ENCODE measurements at regions of chr20 and their contacts with region 1.

Region 1: DNA sequence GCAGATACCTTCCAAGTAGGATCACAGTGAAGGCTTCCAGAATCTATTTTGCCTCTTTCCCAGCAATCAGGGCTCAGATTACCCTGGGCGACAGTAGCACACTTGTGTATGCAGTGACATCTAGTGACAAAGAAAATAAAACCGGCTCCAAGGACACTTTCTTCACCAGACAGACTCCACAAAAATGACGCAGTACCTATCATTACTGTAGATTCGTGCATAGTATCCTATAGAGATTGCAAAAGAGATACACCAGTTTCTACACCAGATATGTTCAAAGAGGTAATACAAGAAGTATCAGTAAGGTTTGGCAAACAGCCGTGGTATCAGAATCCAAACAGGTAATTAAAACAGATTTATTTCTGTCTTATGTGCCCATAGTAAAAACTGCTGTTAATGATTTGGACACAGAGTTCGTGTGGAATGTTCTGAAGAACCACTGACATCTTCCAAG is 600.4 kb upstream of the JAG1 start:
- DNase-seq: peak; percentile 76
- ATAC-seq: peak; percentile 96
- H3K4me3 ChIP-seq: no peak overlapping the region
- H3K27ac ChIP-seq: peak overlapping the region; percentile 68; the same call in 1 of the 2 replicates
- H3K4me1 ChIP-seq: peaks cover 10% of the 10 kb centered on the region; the same call in 1 of the 2 replicates
- H3K27me3 ChIP-seq: no peaks in the 10 kb centered on the region
- CTCF ChIP-seq: peak; percentile 77

Region 2: DNA sequence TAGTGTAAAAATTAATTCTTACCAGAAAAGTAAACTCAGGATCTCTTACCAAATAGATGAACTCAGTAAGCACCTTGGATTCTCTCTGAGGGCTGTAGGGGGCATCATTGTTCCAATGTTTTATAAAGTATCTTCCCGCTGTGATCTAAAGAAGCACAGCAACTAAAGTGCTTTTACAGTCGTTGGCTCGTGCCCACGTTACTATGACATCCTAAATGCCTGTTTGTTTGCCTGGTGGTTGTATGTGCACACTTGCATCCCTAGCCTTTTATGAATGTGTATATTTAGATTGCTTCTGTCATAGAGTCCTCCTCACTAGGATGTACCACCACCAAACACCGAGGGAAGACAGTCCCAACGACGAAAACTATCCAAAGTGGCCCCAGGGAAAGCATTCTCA is 804.6 kb before region 1 on chr20:
- CTCF ChIA-PET with region 1: no interaction called
- POLR2A ChIA-PET with region 1: no interaction called
- in situ Hi-C with region 1: no loop called
- intact Hi-C with region 1: loop called (anchors 10 kb)
- DNase-seq: peak; percentile 60
- ATAC-seq: peak; percentile 65; the same call in 1 of the 2 replicates
- H3K4me3 ChIP-seq: no peak overlapping the region
- H3K27ac ChIP-seq: no peak overlapping the region
- H3K4me1 ChIP-seq: no peaks in the 10 kb centered on the region
- H3K27me3 ChIP-seq: no peaks in the 10 kb centered on the region
- CTCF ChIP-seq: peak; percentile 67

Region 3: DNA sequence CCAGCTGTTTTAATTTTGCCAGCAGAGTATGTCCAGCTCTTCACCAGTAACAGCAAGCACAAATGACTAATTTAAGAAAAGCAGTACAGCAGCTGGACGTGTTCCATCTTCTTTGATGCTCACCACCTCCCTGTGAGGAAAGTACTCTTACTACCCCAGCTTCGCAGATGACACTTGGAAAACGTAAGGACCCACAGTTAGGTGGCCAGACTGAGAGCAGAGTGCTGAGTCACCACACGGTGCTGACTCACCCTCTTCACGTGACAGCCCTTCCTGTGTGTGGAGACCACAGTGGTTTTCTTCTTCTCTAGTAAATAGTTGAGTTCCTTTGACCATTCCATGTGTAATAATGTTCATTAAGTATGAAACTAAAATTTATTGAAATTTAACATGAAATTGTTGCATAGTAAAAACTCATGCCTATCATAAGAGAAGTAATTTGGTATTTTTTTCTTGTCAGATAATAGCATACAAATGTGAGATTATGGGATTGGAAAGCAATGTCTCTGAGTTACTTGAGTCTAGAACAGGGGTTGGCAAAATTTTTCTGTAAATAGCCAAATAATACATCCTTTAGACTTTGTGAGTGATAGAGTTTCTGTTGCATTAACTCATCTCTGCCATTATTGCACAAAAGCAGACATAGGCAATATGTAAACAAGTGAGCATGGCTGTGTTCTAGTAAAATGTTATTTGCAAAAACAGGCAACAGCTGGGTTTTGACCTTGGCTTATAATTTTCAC is 762.5 kb before region 1 on chr20:
- CTCF ChIA-PET with region 1: no interaction called
- POLR2A ChIA-PET with region 1: no interaction called
- in situ Hi-C with region 1: no loop called
- intact Hi-C with region 1: no loop called
- DNase-seq: peak; percentile 96
- ATAC-seq: peak; percentile 98
- H3K4me3 ChIP-seq: peak overlapping the region in 1 of 2 experiments; percentile 22; a peak in 2 of 4 replicates
- H3K27ac ChIP-seq: peak overlapping the region; percentile 90
- H3K4me1 ChIP-seq: peaks cover 33% of the 10 kb centered on the region
- H3K27me3 ChIP-seq: no peaks in the 10 kb centered on the region
- CTCF ChIP-seq: no peak

Region 4: DNA sequence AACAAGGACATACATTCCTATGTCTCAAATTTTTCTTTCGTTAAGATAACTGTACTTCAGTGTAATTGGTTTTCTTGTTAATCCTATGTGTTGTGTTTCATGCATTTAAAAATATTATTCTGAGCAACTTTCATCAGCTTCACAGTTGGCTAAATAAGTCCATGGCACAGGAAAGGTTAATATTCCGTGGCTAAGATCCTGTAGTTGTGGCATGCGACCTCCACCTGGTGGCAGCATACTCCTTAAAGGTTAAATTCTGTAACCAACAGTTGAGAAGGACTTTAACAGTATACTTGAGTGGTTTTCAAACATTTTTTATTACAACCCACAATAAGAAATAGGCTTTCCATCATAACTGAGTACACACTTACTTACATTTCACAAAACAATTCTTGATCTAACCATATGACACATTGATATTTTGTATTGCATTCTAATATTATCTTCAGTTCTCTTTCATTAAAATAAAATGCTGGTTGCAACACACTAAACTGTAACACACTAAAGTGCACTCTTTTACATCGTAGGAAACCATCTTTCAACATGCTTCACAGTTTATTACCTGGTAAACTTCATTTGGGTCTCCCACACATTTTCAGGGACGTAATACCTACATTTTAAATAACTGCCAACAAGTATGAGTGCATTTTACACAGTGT is 720.7 kb before region 1 on chr20:
- CTCF ChIA-PET with region 1: no interaction called
- POLR2A ChIA-PET with region 1: no interaction called
- in situ Hi-C with region 1: no loop called
- intact Hi-C with region 1: loop called (anchors 1 kb)
- DNase-seq: no peak
- ATAC-seq: peak; percentile 81
- H3K4me3 ChIP-seq: no peak overlapping the region
- H3K27ac ChIP-seq: peak overlapping the region; percentile 8; the same call in 1 of the 2 replicates
- H3K4me1 ChIP-seq: peaks cover 18% of the 10 kb centered on the region
- H3K27me3 ChIP-seq: no peaks in the 10 kb centered on the region
- CTCF ChIP-seq: peak; percentile 80; the same call in 1 of the 2 replicates

Region 5: GRCh38 chr20:11204926-11205768 is 69.0 kb before region 1 on chr20:
- CTCF ChIA-PET with region 1: no interaction called
- POLR2A ChIA-PET with region 1: no interaction called
- in situ Hi-C with region 1: no loop called
- intact Hi-C with region 1: loop called (anchors 5 kb)
- DNase-seq: peak; percentile 85
- ATAC-seq: peak; percentile 90
- H3K4me3 ChIP-seq: no peak overlapping the region
- H3K27ac ChIP-seq: no peak overlapping the region; the same call in 1 of the 2 replicates
- H3K4me1 ChIP-seq: peaks cover 14% of the 10 kb centered on the region; the same call in 1 of the 2 replicates
- H3K27me3 ChIP-seq: no peaks in the 10 kb centered on the region
- CTCF ChIP-seq: peak; percentile 88